Endothelial cell of umbilical vein (primary cell): ENCODE measurements at regions of chr1 and their contacts with region 1.

Region 1: DNA sequence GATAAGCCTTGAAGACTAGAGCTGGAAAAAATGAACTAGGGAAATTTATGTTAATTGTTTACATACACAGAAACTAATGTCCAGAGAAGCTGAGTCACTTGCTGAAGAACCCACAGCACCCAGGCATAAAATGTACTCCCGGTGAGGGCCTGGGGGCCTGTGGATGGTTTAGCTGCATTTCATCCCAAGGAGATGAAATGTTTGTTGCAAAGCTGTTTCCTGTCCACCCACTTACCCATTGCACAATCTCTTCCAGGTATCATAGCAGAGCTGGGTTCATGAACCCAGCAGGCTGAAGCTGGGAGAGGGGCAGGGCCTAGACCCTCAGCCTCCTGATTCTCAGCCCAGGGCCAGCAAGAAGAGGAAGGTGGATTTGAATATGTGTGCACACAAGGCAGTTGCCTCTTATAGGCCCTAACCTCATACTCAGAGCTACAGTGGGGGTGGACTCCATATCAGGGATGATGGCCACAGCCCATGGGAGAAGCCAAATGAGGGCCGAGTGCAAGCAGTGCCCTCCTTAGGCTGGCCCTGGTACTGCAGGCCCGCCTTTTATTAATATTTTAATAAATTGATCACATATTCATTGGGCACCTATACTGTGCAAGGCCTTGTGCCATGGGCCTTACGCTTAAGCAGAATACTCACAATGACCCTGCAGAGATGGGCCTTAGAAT is 110.8 kb downstream of the LACTBL1 start:
- DNase-seq: peak; percentile 62
- H3K4me3 ChIP-seq: no peak overlapping the region
- H3K27ac ChIP-seq: no peak overlapping the region
- H3K4me1 ChIP-seq: peaks cover 3% of the 10 kb centered on the region
- H3K27me3 ChIP-seq: no peaks in the 10 kb centered on the region
- CTCF ChIP-seq: peak; percentile 88 to 91
- POLR2A ChIP-seq: no peak

Region 2: GRCh38 chr1:22131875-22132486 is 729.9 kb before region 1 on chr1:
- CTCF ChIA-PET with region 1: no interaction called
- POLR2A ChIA-PET with region 1: no interaction called
- dilution Hi-C with region 1: no loop called
- intact Hi-C with region 1: no loop called
- DNase-seq: peak; percentile 37
- H3K4me3 ChIP-seq: no peak overlapping the region
- H3K27ac ChIP-seq: no peak overlapping the region
- H3K4me1 ChIP-seq: peaks cover 13% of the 10 kb centered on the region
- H3K27me3 ChIP-seq: no peaks in the 10 kb centered on the region
- CTCF ChIP-seq: peak; percentile 87 to 94
- POLR2A ChIP-seq: no peak

Region 3: GRCh38 chr1:22709891-22710700 is 151.8 kb before region 1 on chr1:
- CTCF ChIA-PET with region 1: interaction called, 164 read pairs
- POLR2A ChIA-PET with region 1: no interaction called
- dilution Hi-C with region 1: no loop called
- intact Hi-C with region 1: no loop called
- DNase-seq: peak; percentile 49
- H3K4me3 ChIP-seq: peak overlapping the region; percentile 29 to 50 (median 33)
- H3K27ac ChIP-seq: peak overlapping the region; percentile 61
- H3K4me1 ChIP-seq: peaks cover 20% of the 10 kb centered on the region
- H3K27me3 ChIP-seq: no peaks in the 10 kb centered on the region
- CTCF ChIP-seq: no peak
- POLR2A ChIP-seq: no peak

Region 4: DNA sequence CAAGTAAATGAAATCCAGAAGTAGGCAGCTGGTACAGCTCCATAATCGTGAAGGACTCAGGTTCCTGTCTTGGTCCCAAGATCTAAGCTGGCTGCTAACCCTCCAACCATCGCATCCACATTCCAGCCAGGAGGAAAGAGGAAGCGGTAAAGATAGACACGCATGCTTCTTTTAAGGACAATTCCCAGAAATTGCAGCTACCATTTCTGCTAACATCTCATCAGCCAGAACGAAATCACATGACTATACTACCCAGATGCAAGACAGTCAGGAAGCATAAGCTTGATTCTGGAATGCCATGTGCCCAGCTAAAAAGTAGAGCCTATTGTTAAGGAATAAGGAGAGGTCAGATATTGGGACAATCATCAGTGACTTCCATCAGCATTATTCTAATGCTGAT is 40.9 kb before region 1 on chr1:
- CTCF ChIA-PET with region 1: interaction called, 11 read pairs
- POLR2A ChIA-PET with region 1: no interaction called
- dilution Hi-C with region 1: no loop called
- intact Hi-C with region 1: no loop called
- DNase-seq: peak; percentile 58
- H3K4me3 ChIP-seq: no peak overlapping the region
- H3K27ac ChIP-seq: peak overlapping the region; percentile 67
- H3K4me1 ChIP-seq: peaks cover 21% of the 10 kb centered on the region
- H3K27me3 ChIP-seq: no peaks in the 10 kb centered on the region
- CTCF ChIP-seq: no peak
- POLR2A ChIP-seq: no peak

Region 5: GRCh38 chr1:22876359-22877111 is 14.6 kb after region 1 on chr1:
- CTCF ChIA-PET with region 1: interaction called, 23 read pairs
- POLR2A ChIA-PET with region 1: no interaction called
- dilution Hi-C with region 1: no loop called
- intact Hi-C with region 1: no loop called
- DNase-seq: peak; percentile 77
- H3K4me3 ChIP-seq: no peak overlapping the region
- H3K27ac ChIP-seq: peak overlapping the region; percentile 2
- H3K4me1 ChIP-seq: peaks cover 21% of the 10 kb centered on the region
- H3K27me3 ChIP-seq: no peaks in the 10 kb centered on the region
- CTCF ChIP-seq: no peak
- POLR2A ChIP-seq: no peak